ENCODE measurements at regions of chr14 and their contacts with region 1.

Region 1: GRCh38 chr14:55255979-55256378 is 15.2 kb upstream of the FBXO34 start:
- DNase-seq: no peak
- H3K4me3 ChIP-seq: no peak overlapping the region
- H3K4me3 Mint-ChIP-seq: no peak overlapping the region
- H3K27ac ChIP-seq: no peak overlapping the region
- H3K27ac Mint-ChIP-seq: no peak overlapping the region
- H3K4me1 ChIP-seq: no peaks in the 10 kb centered on the region
- H3K4me1 Mint-ChIP-seq: no peaks in the 10 kb centered on the region
- H3K27me3 ChIP-seq: no peaks in the 10 kb centered on the region
- H3K27me3 Mint-ChIP-seq: peaks cover 1 to 7% of the 10 kb centered on the region in 2 donors

Region 2: DNA sequence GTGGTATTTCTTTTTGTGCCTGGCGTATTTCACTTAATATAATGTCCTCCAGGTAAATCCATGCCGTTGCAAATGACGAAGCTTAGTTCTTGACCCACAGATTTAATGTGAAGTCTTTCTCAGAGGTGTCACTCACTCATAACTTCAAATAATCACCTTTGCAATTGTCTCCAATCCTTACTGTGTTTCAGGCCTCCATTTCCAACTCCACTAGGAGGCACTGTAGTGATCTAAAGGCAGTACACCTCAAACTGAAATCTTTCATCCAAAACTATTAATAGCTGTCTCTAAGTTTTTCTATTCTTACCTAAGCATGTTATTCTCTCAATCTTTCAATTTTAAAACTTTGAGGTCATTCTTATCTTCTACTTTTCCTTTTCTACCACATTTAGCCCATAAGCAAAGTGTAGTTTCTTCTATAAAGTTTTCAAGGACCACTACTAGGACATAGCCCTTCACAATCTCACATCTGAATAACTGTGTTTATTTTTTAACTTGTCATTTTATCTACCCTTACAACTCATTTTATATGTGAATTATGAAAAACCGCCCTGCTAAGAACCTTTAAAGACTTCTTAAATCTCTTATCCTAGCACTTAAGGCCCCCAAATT is 10.2 kb before region 1 on chr14:
- CTCF ChIA-PET with region 1: interaction called, 12 read pairs
- POLR2A ChIA-PET with region 1: no interaction called
- intact Hi-C with region 1: no loop called
- DNase-seq: peak; percentile 43 to 61 (median 48)
- H3K4me3 ChIP-seq: no peak overlapping the region
- H3K4me3 Mint-ChIP-seq: no peak overlapping the region
- H3K27ac ChIP-seq: no peak overlapping the region
- H3K27ac Mint-ChIP-seq: peak overlapping the region in 1 of 7 donors; percentile 50
- H3K4me1 ChIP-seq: no peaks in the 10 kb centered on the region
- H3K4me1 Mint-ChIP-seq: peaks cover 0 to 1% (median 0%) of the 10 kb centered on the region in 4 donors
- H3K27me3 ChIP-seq: no peaks in the 10 kb centered on the region
- H3K27me3 Mint-ChIP-seq: peaks cover 8% of the 10 kb centered on the region in 2 donors

Region 3: GRCh38 chr14:55285048-55285652 is 29.2 kb after region 1 on chr14:
- CTCF ChIA-PET with region 1: no interaction called
- POLR2A ChIA-PET with region 1: no interaction called
- intact Hi-C with region 1: no loop called
- DNase-seq: no peak
- H3K4me3 ChIP-seq: no peak overlapping the region
- H3K4me3 Mint-ChIP-seq: peak overlapping the region in 1 of 8 donors; percentile 17
- H3K27ac ChIP-seq: no peak overlapping the region
- H3K27ac Mint-ChIP-seq: peak overlapping the region in 1 of 7 donors; percentile 33
- H3K4me1 ChIP-seq: peaks cover 7% of the 10 kb centered on the region
- H3K4me1 Mint-ChIP-seq: peaks cover 41 to 65% (median 55%) of the 10 kb centered on the region in 4 donors
- H3K27me3 ChIP-seq: no peaks in the 10 kb centered on the region
- H3K27me3 Mint-ChIP-seq: no peaks in the 10 kb centered on the region